GM12878 (cell line): ENCODE measurements at regions of chr18 and their contacts with region 1.

Region 1: GRCh38 chr18:44758861-44759631 is 78.4 kb downstream of the SETBP1 start:
- DNase-seq: peak; percentile 98
- ATAC-seq: peak; percentile 93
- H3K4me3 ChIP-seq: peak overlapping the region; percentile 28
- H3K27ac ChIP-seq: peak overlapping the region; percentile 98
- H3K4me1 ChIP-seq: peaks cover 35% of the 10 kb centered on the region
- H3K27me3 ChIP-seq: no peaks in the 10 kb centered on the region
- CTCF ChIP-seq: no peak
- EP300 ChIP-seq: peak; percentile 99 to 100
- POLR2A ChIP-seq: no peak
- RAD21 ChIP-seq: peak; percentile 22; the same call in 1 of the 2 replicates

Region 2: GRCh38 chr18:44637210-44638051 is 121.6 kb before region 1 on chr18:
- CTCF ChIA-PET with region 1: no interaction called
- POLR2A ChIA-PET with region 1: no interaction called
- RAD21 ChIA-PET with region 1: no interaction called
- SMC1A ChIA-PET with region 1: no interaction called
- in situ Hi-C with region 1: no loop called
- intact Hi-C with region 1: no loop called
- DNase-seq: no peak
- ATAC-seq: peak; percentile 89
- H3K4me3 ChIP-seq: no peak overlapping the region
- H3K27ac ChIP-seq: no peak overlapping the region
- H3K4me1 ChIP-seq: peaks cover 5% of the 10 kb centered on the region
- H3K27me3 ChIP-seq: no peaks in the 10 kb centered on the region; a peak in 1 of 4 replicates
- CTCF ChIP-seq: no peak
- EP300 ChIP-seq: no peak
- POLR2A ChIP-seq: no peak
- RAD21 ChIP-seq: no peak

Region 3: GRCh38 chr18:44747157-44747556 is 11.9 kb before region 1 on chr18:
- CTCF ChIA-PET with region 1: interaction called, 4 read pairs
- POLR2A ChIA-PET with region 1: interaction called, 3 read pairs
- RAD21 ChIA-PET with region 1: interaction called, 10 read pairs
- SMC1A ChIA-PET with region 1: interaction called, 8 read pairs
- in situ Hi-C with region 1: no loop called
- intact Hi-C with region 1: no loop called
- DNase-seq: no peak
- ATAC-seq: peak; percentile 14; the same call in 2 of the 3 replicates
- H3K4me3 ChIP-seq: no peak overlapping the region
- H3K27ac ChIP-seq: no peak overlapping the region
- H3K4me1 ChIP-seq: peaks cover 33% of the 10 kb centered on the region
- H3K27me3 ChIP-seq: no peaks in the 10 kb centered on the region
- CTCF ChIP-seq: no peak
- EP300 ChIP-seq: no peak
- POLR2A ChIP-seq: no peak
- RAD21 ChIP-seq: no peak

Region 4: DNA sequence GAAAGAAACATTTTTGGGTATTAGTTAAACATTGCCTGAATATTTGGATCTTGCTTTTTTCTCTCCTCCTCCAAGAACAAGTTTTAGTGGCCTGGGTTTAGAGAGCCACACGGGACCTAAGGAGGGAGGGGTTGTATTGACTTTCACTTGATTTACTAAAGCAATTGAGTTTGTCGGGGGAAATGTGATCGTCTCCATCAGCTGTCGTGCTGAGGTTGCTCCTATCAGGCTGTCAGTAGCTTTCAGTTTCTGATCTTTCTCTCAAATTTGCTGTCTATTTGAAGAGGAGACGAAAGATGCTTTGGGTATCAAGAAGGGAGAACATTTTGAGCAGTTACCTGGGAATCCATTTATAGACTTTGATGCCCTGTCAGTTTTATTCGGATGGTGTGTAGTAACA is 27.6 kb after region 1 on chr18:
- CTCF ChIA-PET with region 1: no interaction called
- POLR2A ChIA-PET with region 1: interaction called, 6 read pairs
- RAD21 ChIA-PET with region 1: interaction called, 19 read pairs
- SMC1A ChIA-PET with region 1: interaction called, 17 read pairs
- in situ Hi-C with region 1: no loop called
- intact Hi-C with region 1: no loop called
- DNase-seq: no peak
- ATAC-seq: peak; percentile 85
- H3K4me3 ChIP-seq: peak overlapping the region; percentile 41; the same call in 1 of the 2 replicates
- H3K27ac ChIP-seq: peak overlapping the region; percentile 64
- H3K4me1 ChIP-seq: peaks cover 20% of the 10 kb centered on the region
- H3K27me3 ChIP-seq: no peaks in the 10 kb centered on the region
- CTCF ChIP-seq: no peak
- EP300 ChIP-seq: no peak
- POLR2A ChIP-seq: no peak
- RAD21 ChIP-seq: no peak

Region 5: GRCh38 chr18:44826418-44827259 is 67.6 kb after region 1 on chr18:
- CTCF ChIA-PET with region 1: no interaction called
- POLR2A ChIA-PET with region 1: no interaction called
- RAD21 ChIA-PET with region 1: interaction called, 7 read pairs
- SMC1A ChIA-PET with region 1: interaction called, 17 read pairs
- in situ Hi-C with region 1: no loop called
- intact Hi-C with region 1: no loop called
- DNase-seq: no peak
- ATAC-seq: no peak
- H3K4me3 ChIP-seq: no peak overlapping the region
- H3K27ac ChIP-seq: no peak overlapping the region
- H3K4me1 ChIP-seq: no peaks in the 10 kb centered on the region
- H3K27me3 ChIP-seq: no peaks in the 10 kb centered on the region
- CTCF ChIP-seq: no peak
- EP300 ChIP-seq: no peak
- POLR2A ChIP-seq: no peak
- RAD21 ChIP-seq: no peak

Region 6: DNA sequence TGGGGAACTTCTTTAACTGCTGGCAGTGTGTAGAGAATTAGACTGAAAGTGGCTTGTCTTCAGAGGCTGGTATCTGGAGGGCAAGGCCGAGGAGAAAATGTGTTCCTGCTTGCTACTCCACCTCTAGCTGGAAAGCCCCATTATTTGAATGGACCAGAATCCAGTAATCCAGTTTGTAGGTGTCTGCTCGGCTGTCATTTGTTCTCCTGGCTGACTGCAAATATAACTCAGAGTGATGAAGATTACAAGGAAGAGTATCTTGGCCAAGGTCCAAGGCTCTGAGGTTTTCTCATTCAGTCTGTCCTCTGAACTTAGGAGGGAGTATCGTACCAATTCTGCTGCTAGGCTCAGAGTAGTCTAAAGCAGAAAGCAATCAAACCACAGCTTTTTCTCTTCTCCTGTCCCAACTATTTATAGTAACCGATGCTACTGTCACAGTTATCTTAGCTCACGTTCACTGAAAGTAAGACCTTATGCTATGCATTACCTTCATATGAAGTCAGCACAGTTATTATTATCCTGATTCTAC is 150.2 kb after region 1 on chr18:
- CTCF ChIA-PET with region 1: interaction called, 3 read pairs
- POLR2A ChIA-PET with region 1: interaction called, 3 read pairs
- RAD21 ChIA-PET with region 1: interaction called, 16 read pairs
- SMC1A ChIA-PET with region 1: interaction called, 17 read pairs
- in situ Hi-C with region 1: no loop called
- intact Hi-C with region 1: no loop called
- DNase-seq: peak; percentile 68
- ATAC-seq: peak; percentile 85
- H3K4me3 ChIP-seq: peak overlapping the region; percentile 29; the same call in 1 of the 2 replicates
- H3K27ac ChIP-seq: 0 out of 2 replicates have a peak overlapping the region, but pooled peaks have one; percentile 13
- H3K4me1 ChIP-seq: peaks cover 45% of the 10 kb centered on the region
- H3K27me3 ChIP-seq: no peaks in the 10 kb centered on the region
- CTCF ChIP-seq: no peak
- EP300 ChIP-seq: peak in 1 of 2 experiments; percentile 53; a peak in 2 of 4 replicates
- POLR2A ChIP-seq: no peak
- RAD21 ChIP-seq: 0 out of 2 replicates have a peak, but pooled peaks have one; percentile 11

Region 7: GRCh38 chr18:45248240-45248903 is 489.3 kb after region 1 on chr18:
- CTCF ChIA-PET with region 1: no interaction called
- POLR2A ChIA-PET with region 1: no interaction called
- RAD21 ChIA-PET with region 1: no interaction called
- SMC1A ChIA-PET with region 1: no interaction called
- in situ Hi-C with region 1: no loop called
- intact Hi-C with region 1: no loop called
- DNase-seq: no peak
- ATAC-seq: no peak
- H3K4me3 ChIP-seq: no peak overlapping the region
- H3K27ac ChIP-seq: no peak overlapping the region
- H3K4me1 ChIP-seq: no peaks in the 10 kb centered on the region
- H3K27me3 ChIP-seq: no peaks in the 10 kb centered on the region; a peak in 1 of 4 replicates
- CTCF ChIP-seq: no peak
- EP300 ChIP-seq: no peak
- POLR2A ChIP-seq: no peak
- RAD21 ChIP-seq: no peak